Caco-2 (cell line): ENCODE measurements at regions of chr10 and their contacts with region 1.

Region 1: GRCh38 chr10:95693668-95694534 is at the start of gene TCTN3:
- DNase-seq: peak; percentile 99
- H3K4me3 ChIP-seq: peak within 1 kb of the TSS; percentile 86
- H3K4me3 Mint-ChIP-seq: peak within 1 kb of the TSS; percentile 97
- H3K27ac Mint-ChIP-seq: peak within 1 kb of the TSS; percentile 99
- H3K4me1 ChIP-seq: 0 out of 2 replicates have a peak, but pooled peaks cover 2% of the 10 kb centered on the region
- H3K4me1 Mint-ChIP-seq: peaks cover 17% of the 10 kb centered on the region
- H3K27me3 ChIP-seq: no peaks in the 10 kb centered on the region
- H3K27me3 Mint-ChIP-seq: no peaks in the 10 kb centered on the region
- CTCF ChIP-seq: peak; percentile 98 to 99
- total RNA-seq, gene TCTN3: 49.2 and 52.1 TPM in 2 replicates

Region 2: GRCh38 chr10:95588025-95588424 is 105.9 kb before region 1 on chr10:
- CTCF ChIA-PET with region 1: no interaction called
- POLR2A ChIA-PET with region 1: no interaction called
- intact Hi-C with region 1: no loop called
- DNase-seq: no peak
- H3K4me3 ChIP-seq: no peak overlapping the region
- H3K4me3 Mint-ChIP-seq: no peak overlapping the region
- H3K27ac Mint-ChIP-seq: no peak overlapping the region
- H3K4me1 ChIP-seq: no peaks in the 10 kb centered on the region
- H3K4me1 Mint-ChIP-seq: no peaks in the 10 kb centered on the region
- H3K27me3 ChIP-seq: no peaks in the 10 kb centered on the region; the same call in 1 of the 2 replicates
- H3K27me3 Mint-ChIP-seq: no peaks in the 10 kb centered on the region
- CTCF ChIP-seq: no peak

Region 3: GRCh38 chr10:95635319-95635733 is 58.6 kb before region 1 on chr10:
- CTCF ChIA-PET with region 1: interaction called, 22 read pairs
- POLR2A ChIA-PET with region 1: interaction called, 7 read pairs
- intact Hi-C with region 1: no loop called
- DNase-seq: peak; percentile 63 to 72
- H3K4me3 ChIP-seq: no peak overlapping the region
- H3K4me3 Mint-ChIP-seq: peak overlapping the region; percentile 40
- H3K27ac Mint-ChIP-seq: peak overlapping the region; percentile 63
- H3K4me1 ChIP-seq: peaks cover 37% of the 10 kb centered on the region
- H3K4me1 Mint-ChIP-seq: peaks cover 36% of the 10 kb centered on the region
- H3K27me3 ChIP-seq: no peaks in the 10 kb centered on the region
- H3K27me3 Mint-ChIP-seq: no peaks in the 10 kb centered on the region
- CTCF ChIP-seq: no peak

Region 4: GRCh38 chr10:95675403-95676112 is 18.3 kb before region 1 on chr10:
- CTCF ChIA-PET with region 1: interaction called, 16 read pairs
- POLR2A ChIA-PET with region 1: interaction called, 8 read pairs
- intact Hi-C with region 1: loop called (anchors 2 kb)
- DNase-seq: peak in 1 of 2 experiments; percentile 67
- H3K4me3 ChIP-seq: no peak overlapping the region
- H3K4me3 Mint-ChIP-seq: peak overlapping the region; percentile 53
- H3K27ac Mint-ChIP-seq: peak overlapping the region; percentile 90
- H3K4me1 ChIP-seq: peaks cover 27% of the 10 kb centered on the region
- H3K4me1 Mint-ChIP-seq: peaks cover 5% of the 10 kb centered on the region
- H3K27me3 ChIP-seq: no peaks in the 10 kb centered on the region
- H3K27me3 Mint-ChIP-seq: no peaks in the 10 kb centered on the region
- CTCF ChIP-seq: no peak

Region 5: GRCh38 chr10:95728526-95728925 is 34.6 kb after region 1 on chr10:
- CTCF ChIA-PET with region 1: interaction called, 66 read pairs
- POLR2A ChIA-PET with region 1: interaction called, 5 read pairs
- intact Hi-C with region 1: loop called (anchors 1 kb)
- DNase-seq: peak in 1 of 2 experiments; percentile 16
- H3K4me3 ChIP-seq: no peak overlapping the region
- H3K4me3 Mint-ChIP-seq: no peak overlapping the region
- H3K27ac Mint-ChIP-seq: no peak overlapping the region
- H3K4me1 ChIP-seq: no peaks in the 10 kb centered on the region
- H3K4me1 Mint-ChIP-seq: no peaks in the 10 kb centered on the region
- H3K27me3 ChIP-seq: no peaks in the 10 kb centered on the region
- H3K27me3 Mint-ChIP-seq: peaks cover 3% of the 10 kb centered on the region
- CTCF ChIP-seq: peak in 1 of 2 experiments; percentile 17

Region 6: GRCh38 chr10:95850791-95851190 is 156.9 kb after region 1 on chr10:
- CTCF ChIA-PET with region 1: interaction called, 11 read pairs
- POLR2A ChIA-PET with region 1: no interaction called
- intact Hi-C with region 1: no loop called
- DNase-seq: no peak
- H3K4me3 ChIP-seq: no peak overlapping the region
- H3K4me3 Mint-ChIP-seq: no peak overlapping the region
- H3K27ac Mint-ChIP-seq: no peak overlapping the region
- H3K4me1 ChIP-seq: no peaks in the 10 kb centered on the region
- H3K4me1 Mint-ChIP-seq: no peaks in the 10 kb centered on the region
- H3K27me3 ChIP-seq: no peaks in the 10 kb centered on the region
- H3K27me3 Mint-ChIP-seq: peaks cover under 1% of the 10 kb centered on the region
- CTCF ChIP-seq: no peak

Region 7: DNA sequence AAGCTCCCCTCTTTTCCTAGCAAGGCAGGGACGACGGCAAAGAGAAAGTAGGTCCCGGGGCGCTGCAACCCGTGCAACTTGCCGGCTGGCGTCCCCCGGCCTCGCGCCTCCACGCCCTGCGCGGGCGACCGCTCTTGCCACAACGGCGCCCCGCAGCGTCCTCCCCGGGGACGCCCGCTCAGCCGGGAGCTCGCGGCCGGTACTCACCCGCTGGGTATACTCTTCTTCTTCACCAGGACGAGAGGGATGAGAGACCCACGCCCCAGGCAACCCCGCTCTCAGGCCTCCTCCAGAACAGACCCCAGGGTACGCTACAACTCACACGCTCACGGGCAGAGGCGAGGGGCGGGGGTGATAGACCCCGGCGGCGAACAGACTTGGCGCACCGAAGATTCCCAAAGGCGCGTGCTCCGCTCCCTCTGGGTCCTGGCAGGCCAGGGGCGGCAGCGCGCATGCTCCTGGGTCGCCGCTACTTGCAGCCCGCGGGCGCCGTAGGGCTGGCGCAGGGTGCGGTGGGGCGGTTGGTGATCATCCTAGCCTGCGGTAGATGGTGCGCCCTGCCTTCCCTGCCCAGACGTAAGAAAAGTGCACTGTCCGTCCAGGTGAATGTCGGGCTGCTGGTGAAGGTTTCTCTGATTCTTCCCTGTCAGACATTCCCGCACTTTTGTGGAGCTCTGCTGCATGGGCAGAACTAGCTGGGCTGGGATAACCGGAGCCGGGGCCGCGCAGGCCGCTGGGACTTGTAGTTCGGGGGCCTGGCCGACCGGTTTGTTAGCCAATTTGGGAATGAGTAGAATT is 213.8 kb after region 1 on chr10 and contains the start of gene CC2D2B:
- CTCF ChIA-PET with region 1: interaction called, 31 read pairs
- POLR2A ChIA-PET with region 1: no interaction called
- intact Hi-C with region 1: loop called (anchors 5 kb)
- DNase-seq: peak; percentile 83 to 90
- H3K4me3 ChIP-seq: peak within 1 kb of the TSS; percentile 62
- H3K4me3 Mint-ChIP-seq: peak within 1 kb of the TSS; percentile 91
- H3K27ac Mint-ChIP-seq: peak within 1 kb of the TSS; percentile 94
- H3K4me1 ChIP-seq: no peaks in the 10 kb centered on the region
- H3K4me1 Mint-ChIP-seq: peaks cover 7% of the 10 kb centered on the region
- H3K27me3 ChIP-seq: no peaks in the 10 kb centered on the region
- H3K27me3 Mint-ChIP-seq: peaks cover 2% of the 10 kb centered on the region
- CTCF ChIP-seq: peak in 1 of 2 experiments; percentile 27
- total RNA-seq, gene CC2D2B: 0.39 and 0.77 TPM in 2 replicates

Region 8: GRCh38 chr10:96017191-96017687 is 323.3 kb after region 1 on chr10:
- CTCF ChIA-PET with region 1: interaction called, 5 read pairs
- POLR2A ChIA-PET with region 1: no interaction called
- intact Hi-C with region 1: loop called (anchors 1 kb)
- DNase-seq: peak; percentile 54 to 75
- H3K4me3 ChIP-seq: no peak overlapping the region
- H3K4me3 Mint-ChIP-seq: no peak overlapping the region
- H3K27ac Mint-ChIP-seq: no peak overlapping the region
- H3K4me1 ChIP-seq: 0 out of 2 replicates have a peak, but pooled peaks cover 5% of the 10 kb centered on the region
- H3K4me1 Mint-ChIP-seq: peaks cover 6% of the 10 kb centered on the region
- H3K27me3 ChIP-seq: no peaks in the 10 kb centered on the region
- H3K27me3 Mint-ChIP-seq: no peaks in the 10 kb centered on the region
- CTCF ChIP-seq: peak; percentile 64 to 75